Posterior vena cava (tissue), 2 donors: ENCODE measurements at regions of chr3 and their contacts with region 1.

Region 1: GRCh38 chr3:39132140-39133097 is 21.0 kb downstream of the CSRNP1 start:
- DNase-seq: peak; percentile 44

Region 2: GRCh38 chr3:39101022-39101689 is 31.3 kb before region 1 on chr3:
- intact Hi-C with region 1: no loop called
- DNase-seq: no peak

Region 3: GRCh38 chr3:40679290-40679689 is 1546.9 kb after region 1 on chr3:
- intact Hi-C with region 1: loop called in 1 of 2 experiments (anchors 5 kb)
- DNase-seq: no peak